GM12878 (cell line): ENCODE measurements at regions of chr7 and their contacts with region 1.

Region 1: DNA sequence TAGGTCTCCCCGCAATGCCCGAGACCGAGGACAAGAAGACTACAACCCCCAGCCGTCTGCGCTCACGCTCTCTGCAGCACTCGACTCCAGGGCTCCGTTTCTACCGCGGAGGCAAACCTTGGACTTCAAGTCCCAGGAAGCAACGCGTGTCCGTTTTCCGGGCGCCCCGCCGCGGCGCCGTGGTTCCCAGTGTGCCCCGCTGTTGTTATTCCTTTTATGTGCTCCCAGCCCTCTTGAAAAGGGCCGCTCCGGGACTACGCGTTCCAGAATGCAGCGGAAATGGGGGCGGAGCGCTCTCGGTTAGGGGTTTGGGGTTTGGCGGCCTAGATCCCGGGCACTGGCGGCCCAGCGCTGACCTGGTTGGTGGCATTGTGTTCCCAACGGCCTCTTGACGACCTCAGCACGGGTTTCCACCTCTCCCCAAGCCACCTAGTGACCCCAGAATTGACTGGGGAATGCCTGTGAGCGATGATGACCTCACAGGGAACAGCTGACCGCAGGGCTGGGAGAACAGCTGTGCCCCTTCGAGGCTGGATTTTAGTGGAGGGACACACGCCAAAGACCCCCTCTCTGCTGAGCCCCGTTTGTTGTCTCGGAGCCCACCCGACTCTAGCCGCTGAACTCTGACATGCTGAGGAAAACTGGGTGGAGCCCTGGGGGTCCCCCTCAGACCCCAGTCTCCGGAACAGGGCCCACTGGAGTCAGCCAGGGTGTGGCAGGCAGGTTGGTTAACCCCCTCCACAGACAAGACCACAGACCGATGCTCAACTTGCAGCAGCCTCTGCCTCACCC is 488 bp upstream of the CDK5 start:
- DNase-seq: peak; percentile 95
- ATAC-seq: peak; percentile 93
- H3K4me3 ChIP-seq: peak overlapping the region; percentile 99
- H3K27ac ChIP-seq: peak overlapping the region; percentile 88
- H3K4me1 ChIP-seq: peaks cover 24% of the 10 kb centered on the region
- H3K27me3 ChIP-seq: no peaks in the 10 kb centered on the region
- CTCF ChIP-seq: no peak
- EP300 ChIP-seq: peak in 1 of 2 experiments; percentile 8; a peak in 1 of 4 replicates
- POLR2A ChIP-seq: peak; percentile 73
- RAD21 ChIP-seq: no peak

Region 2: DNA sequence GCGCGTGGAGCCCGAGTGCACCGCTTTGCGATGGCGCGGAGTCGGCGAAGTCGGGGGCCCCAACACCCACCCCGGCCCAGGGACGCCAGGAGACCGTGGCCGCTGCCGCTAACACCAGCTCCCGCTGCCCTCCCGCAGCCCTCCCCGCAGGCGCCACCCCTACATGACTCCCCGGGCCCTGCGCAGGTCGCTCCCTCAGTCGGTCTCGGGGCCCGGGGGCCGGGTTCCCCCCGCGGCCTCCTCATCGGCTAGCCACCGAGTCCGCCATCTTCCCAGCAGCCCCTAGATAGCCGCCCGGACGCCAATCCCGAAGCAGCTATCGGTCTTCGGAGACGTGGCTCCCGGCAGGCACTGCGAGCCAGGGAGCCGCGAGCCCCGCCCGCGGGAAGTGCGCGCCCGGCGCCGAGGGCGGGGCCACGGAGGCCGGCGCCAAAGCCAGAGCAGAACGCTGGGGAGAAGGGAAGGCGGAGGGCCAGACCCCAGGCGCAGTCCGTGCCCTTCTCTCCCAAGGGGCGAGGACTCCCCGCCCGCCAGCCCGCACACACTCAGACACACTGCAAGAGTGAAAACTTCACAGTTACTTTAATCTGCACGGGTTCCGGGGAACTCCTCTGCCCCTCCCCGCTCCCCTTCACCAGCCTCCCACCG is 22.5 kb after region 1 on chr7 and contains the start of gene FASTK:
- CTCF ChIA-PET with region 1: interaction called, 8 read pairs
- POLR2A ChIA-PET with region 1: interaction called, 9 read pairs
- RAD21 ChIA-PET with region 1: no interaction called
- SMC1A ChIA-PET with region 1: interaction called, 5 read pairs
- in situ Hi-C with region 1: no loop called
- intact Hi-C with region 1: loop called (anchors 1 kb)
- DNase-seq: no peak
- ATAC-seq: peak; percentile 89
- H3K4me3 ChIP-seq: peak within 1 kb of the TSS; percentile 83
- H3K27ac ChIP-seq: peak within 1 kb of the TSS; percentile 90
- H3K4me1 ChIP-seq: peaks cover 31% of the 10 kb centered on the region
- H3K27me3 ChIP-seq: no peaks in the 10 kb centered on the region
- CTCF ChIP-seq: no peak
- EP300 ChIP-seq: no peak
- POLR2A ChIP-seq: peak; percentile 91
- RAD21 ChIP-seq: no peak
- polyA plus RNA-seq, gene FASTK: 0.19 to 4.1 TPM

Region 3: DNA sequence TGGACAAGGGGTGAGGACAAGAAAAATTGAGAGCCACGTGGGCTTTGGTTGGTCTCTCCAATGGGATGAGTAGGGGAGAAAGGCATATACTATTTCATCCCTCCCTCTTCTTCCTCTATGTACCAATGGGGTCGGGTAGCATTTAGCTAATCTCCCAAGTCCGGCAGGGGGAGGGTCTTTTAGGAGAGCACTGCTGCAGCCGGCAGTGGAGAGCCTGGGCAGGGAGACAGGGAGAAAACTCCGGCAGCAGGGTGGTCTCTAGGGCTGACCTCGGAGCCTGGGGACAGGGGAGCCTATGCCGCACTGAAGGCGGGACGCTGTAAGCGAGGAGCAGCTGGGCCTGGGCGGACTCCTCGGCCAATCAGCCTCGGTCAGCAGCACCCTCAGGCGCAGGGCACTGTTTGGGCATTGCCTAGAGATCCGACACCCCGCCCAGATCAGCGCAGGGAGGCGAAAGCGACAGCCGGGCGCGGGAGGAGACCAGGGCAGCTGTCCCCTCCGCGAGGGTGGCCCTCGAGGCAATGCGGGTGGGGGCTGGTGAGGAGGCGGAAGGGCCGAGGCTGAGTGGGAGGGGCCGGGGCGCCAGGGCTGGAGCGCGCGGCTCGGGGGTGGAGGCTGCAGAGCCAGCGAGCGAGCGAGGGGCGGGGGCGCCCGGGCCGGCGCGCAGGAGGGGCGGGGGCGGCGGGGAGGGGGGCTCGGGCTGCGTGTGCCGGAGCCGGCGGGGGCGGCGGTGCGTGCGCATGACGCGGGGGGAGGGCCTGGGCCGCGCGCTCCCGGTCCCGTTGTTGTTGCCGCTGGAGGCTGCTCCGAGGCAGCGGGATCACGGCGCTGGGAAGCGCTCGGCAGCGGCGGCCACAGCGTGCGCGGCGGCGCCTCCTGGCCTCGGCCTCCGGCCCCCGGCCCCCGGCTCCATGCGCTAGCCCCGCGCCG is 27.8 kb after region 1 on chr7 and contains the start of gene AGAP3:
- CTCF ChIA-PET with region 1: interaction called, 8 read pairs
- POLR2A ChIA-PET with region 1: interaction called, 9 read pairs
- RAD21 ChIA-PET with region 1: interaction called, 3 read pairs
- SMC1A ChIA-PET with region 1: interaction called, 5 read pairs
- in situ Hi-C with region 1: no loop called
- intact Hi-C with region 1: loop called (anchors 2 kb)
- DNase-seq: no peak
- ATAC-seq: peak; percentile 55
- H3K4me3 ChIP-seq: peak within 1 kb of the TSS; percentile 87
- H3K27ac ChIP-seq: peak within 1 kb of the TSS; percentile 80
- H3K4me1 ChIP-seq: peaks cover 36% of the 10 kb centered on the region
- H3K27me3 ChIP-seq: no peaks in the 10 kb centered on the region
- CTCF ChIP-seq: no peak
- EP300 ChIP-seq: no peak
- POLR2A ChIP-seq: peak; percentile 85
- RAD21 ChIP-seq: no peak
- polyA plus RNA-seq, gene AGAP3: 1.8 to 4.7 TPM

Region 4: GRCh38 chr7:151172273-151173141 is 114.3 kb after region 1 on chr7:
- CTCF ChIA-PET with region 1: no interaction called
- POLR2A ChIA-PET with region 1: no interaction called
- RAD21 ChIA-PET with region 1: no interaction called
- SMC1A ChIA-PET with region 1: no interaction called
- in situ Hi-C with region 1: no loop called
- intact Hi-C with region 1: no loop called
- DNase-seq: no peak
- ATAC-seq: peak; percentile 87
- H3K4me3 ChIP-seq: no peak overlapping the region
- H3K27ac ChIP-seq: no peak overlapping the region
- H3K4me1 ChIP-seq: no peaks in the 10 kb centered on the region
- H3K27me3 ChIP-seq: peaks cover 5 to 19% of the 10 kb centered on the region in 2 experiments
- CTCF ChIP-seq: peak; percentile 100; a peak in 5 of 6 replicates
- EP300 ChIP-seq: no peak
- POLR2A ChIP-seq: no peak
- RAD21 ChIP-seq: peak; percentile 75